Calu3 (cell line): ENCODE measurements at regions of chr2 and their contacts with region 1.

Region 1: GRCh38 chr2:172456002-172456401 is 28.6 kb downstream of the ITGA6 start:
- DNase-seq: peak; percentile 58
- H3K4me3 Mint-ChIP-seq: peak overlapping the region; percentile 13
- H3K27ac Mint-ChIP-seq: peak overlapping the region; percentile 40
- H3K4me1 Mint-ChIP-seq: peaks cover 90% of the 10 kb centered on the region
- H3K27me3 Mint-ChIP-seq: no peaks in the 10 kb centered on the region
- CTCF ChIP-seq: no peak

Region 2: GRCh38 chr2:172339371-172340010 is 116.5 kb before region 1 on chr2:
- CTCF ChIA-PET with region 1: interaction called, 6 read pairs
- intact Hi-C with region 1: loop called (anchors 1 kb)
- DNase-seq: peak; percentile 16
- H3K4me3 Mint-ChIP-seq: peak overlapping the region; percentile 53
- H3K27ac Mint-ChIP-seq: peak overlapping the region; percentile 28
- H3K4me1 Mint-ChIP-seq: peaks cover 39% of the 10 kb centered on the region
- H3K27me3 Mint-ChIP-seq: no peaks in the 10 kb centered on the region
- CTCF ChIP-seq: no peak

Region 3: GRCh38 chr2:172427256-172427989 is 28.6 kb before region 1 on chr2 and contains the start of gene ITGA6:
- CTCF ChIA-PET with region 1: interaction called, 84 read pairs
- intact Hi-C with region 1: loop called (anchors 1 kb)
- DNase-seq: peak; percentile 94
- H3K4me3 Mint-ChIP-seq: peak within 1 kb of the TSS; percentile 95
- H3K27ac Mint-ChIP-seq: peak within 1 kb of the TSS; percentile 89
- H3K4me1 Mint-ChIP-seq: peaks cover 24% of the 10 kb centered on the region
- H3K27me3 Mint-ChIP-seq: no peaks in the 10 kb centered on the region
- CTCF ChIP-seq: no peak
- total RNA-seq, gene ITGA6: 242 and 270 TPM in 2 replicates

Region 4: GRCh38 chr2:172442072-172442895 is 13.7 kb before region 1 on chr2:
- CTCF ChIA-PET with region 1: interaction called, 75 read pairs
- intact Hi-C with region 1: loop called (anchors 2 kb)
- DNase-seq: peak; percentile 93
- H3K4me3 Mint-ChIP-seq: peak overlapping the region; percentile 63
- H3K27ac Mint-ChIP-seq: peak overlapping the region; percentile 96
- H3K4me1 Mint-ChIP-seq: peaks cover 29% of the 10 kb centered on the region
- H3K27me3 Mint-ChIP-seq: no peaks in the 10 kb centered on the region
- CTCF ChIP-seq: no peak